ENCODE measurements at regions of chr5 and their contacts with region 1.

Region 1: GRCh38 chr5:147805030-147805454 is 22.5 kb upstream of the JAKMIP2 start:
- DNase-seq: peak; percentile 59 to 69
- ATAC-seq: peak; percentile 92 to 96 (median 95)
- H3K4me3 ChIP-seq: no peak overlapping the region
- H3K4me3 Mint-ChIP-seq: peak overlapping the region; percentile 51
- H3K27ac ChIP-seq: peak overlapping the region; percentile 25
- H3K27ac Mint-ChIP-seq: peak overlapping the region; percentile 59 to 90
- H3K4me1 ChIP-seq: peaks cover 14% of the 10 kb centered on the region
- H3K4me1 Mint-ChIP-seq: peaks cover 22 to 33% of the 10 kb centered on the region in 2 donors
- H3K27me3 ChIP-seq: no peaks in the 10 kb centered on the region
- H3K27me3 Mint-ChIP-seq: peaks cover 0 to under 1% of the 10 kb centered on the region in 2 donors
- CTCF ChIP-seq: no peak

Region 2: GRCh38 chr5:147712598-147712997 is 92.4 kb before region 1 on chr5:
- intact Hi-C with region 1: loop called (anchors 5 kb)
- DNase-seq: no peak
- ATAC-seq: peak in 2 of 3 donors; percentile 37 to 65
- H3K4me3 ChIP-seq: peak overlapping the region; percentile 0
- H3K4me3 Mint-ChIP-seq: peak overlapping the region; percentile 93
- H3K27ac ChIP-seq: peak overlapping the region; percentile 5
- H3K27ac Mint-ChIP-seq: peak overlapping the region; percentile 76 to 86
- H3K4me1 ChIP-seq: peaks cover 4% of the 10 kb centered on the region
- H3K4me1 Mint-ChIP-seq: peaks cover 36 to 38% of the 10 kb centered on the region in 2 donors
- H3K27me3 ChIP-seq: no peaks in the 10 kb centered on the region
- H3K27me3 Mint-ChIP-seq: no peaks in the 10 kb centered on the region
- CTCF ChIP-seq: no peak

Region 3: DNA sequence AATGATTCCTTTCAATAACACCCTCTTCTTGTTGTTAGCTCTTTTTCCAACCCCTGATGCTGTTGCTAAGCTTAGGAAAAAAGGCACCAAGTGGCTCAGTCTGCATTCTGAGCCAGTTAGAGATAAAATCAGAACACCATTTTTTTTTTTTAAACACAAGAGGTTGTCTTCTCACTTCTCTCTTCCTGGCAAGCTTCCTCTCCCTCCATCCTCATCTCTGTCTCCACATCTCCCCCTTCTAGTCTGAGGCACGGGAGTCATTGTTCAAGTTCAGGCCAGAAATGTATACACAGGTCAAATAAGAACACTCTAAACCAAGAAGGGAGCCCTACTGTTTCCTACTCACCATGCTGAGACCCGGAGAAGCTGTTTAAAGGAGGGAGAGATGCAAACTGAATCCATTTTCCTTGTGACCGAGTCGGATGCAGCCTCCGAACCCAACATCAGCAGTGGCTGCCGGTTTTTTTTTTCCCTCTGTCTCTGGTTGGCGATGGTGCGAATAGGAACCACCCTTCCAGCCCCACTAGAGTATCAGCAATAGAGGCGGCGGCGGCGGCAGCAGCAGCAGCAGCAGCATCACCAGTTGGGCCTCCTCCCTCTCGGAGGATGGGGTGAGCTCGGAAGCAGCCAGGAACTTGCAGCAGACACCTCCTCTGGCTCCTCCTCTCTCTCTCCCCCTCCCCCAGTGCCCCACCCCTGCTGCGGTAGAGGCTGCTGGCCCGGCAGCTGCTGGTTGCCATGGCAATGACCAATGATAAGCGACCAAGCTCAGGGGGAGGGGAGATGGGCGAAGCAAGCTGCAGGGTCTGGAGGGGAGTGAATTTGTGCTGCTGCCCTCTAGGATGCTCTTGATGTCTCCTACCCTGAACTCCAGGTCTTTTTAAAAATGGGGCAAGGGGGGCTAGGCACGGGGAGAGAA is 22.7 kb before region 1 on chr5 and contains the start of gene JAKMIP2:
- intact Hi-C with region 1: loop called (anchors 2 kb)
- DNase-seq: peak; percentile 70 to 88
- ATAC-seq: peak; percentile 95 to 98 (median 97)
- H3K4me3 ChIP-seq: peak within 1 kb of the TSS; percentile 61
- H3K4me3 Mint-ChIP-seq: peak within 1 kb of the TSS; percentile 97
- H3K27ac ChIP-seq: peak within 1 kb of the TSS; percentile 74
- H3K27ac Mint-ChIP-seq: peak within 1 kb of the TSS; percentile 92 to 94
- H3K4me1 ChIP-seq: peaks cover 14% of the 10 kb centered on the region
- H3K4me1 Mint-ChIP-seq: peaks cover 30 to 33% of the 10 kb centered on the region in 2 donors
- H3K27me3 ChIP-seq: no peaks in the 10 kb centered on the region
- H3K27me3 Mint-ChIP-seq: no peaks in the 10 kb centered on the region
- CTCF ChIP-seq: no peak
- total RNA-seq, gene JAKMIP2: 12.2 to 16.1 (median 14.9) TPM

Region 4: GRCh38 chr5:147822686-147823491 is 17.8 kb after region 1 on chr5:
- intact Hi-C with region 1: no loop called
- DNase-seq: peak; percentile 26 to 79
- ATAC-seq: peak; percentile 94 to 99 (median 98)
- H3K4me3 ChIP-seq: no peak overlapping the region
- H3K4me3 Mint-ChIP-seq: no peak overlapping the region
- H3K27ac ChIP-seq: no peak overlapping the region
- H3K27ac Mint-ChIP-seq: no peak overlapping the region
- H3K4me1 ChIP-seq: no peaks in the 10 kb centered on the region
- H3K4me1 Mint-ChIP-seq: peaks cover 0 to 9% of the 10 kb centered on the region in 2 donors
- H3K27me3 ChIP-seq: no peaks in the 10 kb centered on the region
- H3K27me3 Mint-ChIP-seq: peaks cover 13 to 14% of the 10 kb centered on the region in 2 donors
- CTCF ChIP-seq: peak; percentile 99

Region 5: DNA sequence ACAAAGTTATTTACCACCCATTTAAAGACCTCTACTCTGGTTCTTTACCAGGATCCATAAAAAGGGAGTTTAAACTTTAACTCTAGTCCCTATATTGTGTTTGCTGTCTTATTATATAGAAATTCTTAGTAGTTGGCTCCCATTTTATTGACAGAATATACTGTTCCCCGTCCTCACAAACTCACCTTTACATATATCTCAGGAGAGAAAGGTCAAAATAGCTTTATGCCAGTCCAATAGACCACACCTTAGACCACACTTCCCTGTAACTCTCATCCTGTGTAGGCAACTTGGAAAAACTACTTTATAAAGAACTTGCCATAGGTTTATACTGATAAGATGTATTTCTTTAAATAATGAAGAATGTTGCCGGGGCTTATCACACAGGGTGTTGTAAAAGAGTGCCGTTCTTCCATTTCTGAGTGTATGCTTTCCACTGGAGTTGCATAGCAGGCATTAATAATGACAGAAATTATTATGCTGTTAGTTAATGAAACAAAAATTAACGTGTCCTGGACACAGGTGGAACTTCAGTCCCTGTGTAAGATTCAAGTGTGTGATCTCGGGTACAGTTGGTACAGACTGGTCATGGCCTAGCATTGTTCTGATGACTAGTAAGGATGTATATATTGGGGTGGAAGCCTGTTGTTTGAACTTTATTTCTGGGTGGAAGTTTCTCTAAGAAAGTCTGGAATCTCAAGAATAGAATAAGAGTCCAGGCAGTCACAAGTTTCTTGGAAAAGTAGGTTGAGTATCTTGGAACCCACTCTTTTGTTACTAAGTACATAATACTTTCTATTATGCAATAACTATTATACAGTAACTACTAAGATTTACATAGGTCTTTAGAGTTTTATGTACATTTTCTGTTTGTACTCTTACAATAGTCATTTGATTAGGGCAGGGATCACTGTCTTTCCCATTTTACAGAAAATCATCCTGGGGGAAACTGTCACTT is 330.3 kb after region 1 on chr5:
- intact Hi-C with region 1: no loop called
- DNase-seq: no peak
- ATAC-seq: no peak
- H3K4me3 ChIP-seq: no peak overlapping the region
- H3K4me3 Mint-ChIP-seq: no peak overlapping the region
- H3K27ac ChIP-seq: no peak overlapping the region
- H3K27ac Mint-ChIP-seq: no peak overlapping the region
- H3K4me1 ChIP-seq: no peaks in the 10 kb centered on the region
- H3K4me1 Mint-ChIP-seq: no peaks in the 10 kb centered on the region
- H3K27me3 ChIP-seq: no peaks in the 10 kb centered on the region
- H3K27me3 Mint-ChIP-seq: peaks cover 0 to under 1% of the 10 kb centered on the region in 2 donors
- CTCF ChIP-seq: no peak

Region 6: DNA sequence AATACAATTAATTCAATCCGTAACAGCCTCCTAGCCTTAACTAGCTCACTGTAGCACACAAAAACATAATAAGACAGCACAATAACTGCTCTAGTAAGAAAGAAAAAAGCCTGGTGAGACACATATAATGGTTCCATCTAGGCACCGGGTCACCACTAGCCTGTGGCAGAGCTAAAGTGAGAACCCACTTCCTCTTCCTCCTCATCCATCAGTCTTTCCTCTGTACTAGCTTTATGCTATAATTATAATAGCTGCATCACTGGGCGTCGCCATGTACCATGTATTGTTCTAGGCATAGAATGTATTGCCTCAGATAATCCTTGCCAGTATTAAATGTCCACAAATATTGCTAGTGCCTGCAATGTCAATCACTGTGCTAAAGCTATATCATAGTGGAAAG is 1044.4 kb after region 1 on chr5:
- intact Hi-C with region 1: loop called (anchors 10 kb)
- DNase-seq: peak; percentile 54 to 77
- ATAC-seq: peak; percentile 52 to 82 (median 75)
- H3K4me3 ChIP-seq: no peak overlapping the region
- H3K4me3 Mint-ChIP-seq: peak overlapping the region; percentile 95
- H3K27ac ChIP-seq: peak overlapping the region; percentile 93
- H3K27ac Mint-ChIP-seq: peak overlapping the region; percentile 94 to 97
- H3K4me1 ChIP-seq: peaks cover 76% of the 10 kb centered on the region
- H3K4me1 Mint-ChIP-seq: peaks cover 89 to 90% of the 10 kb centered on the region in 2 donors
- H3K27me3 ChIP-seq: no peaks in the 10 kb centered on the region
- H3K27me3 Mint-ChIP-seq: no peaks in the 10 kb centered on the region
- CTCF ChIP-seq: no peak

Measured in natural killer cell (primary cell).